Ovary (tissue), 10 donors: ENCODE measurements at regions of chr20 and their contacts with region 1.

Region 1: DNA sequence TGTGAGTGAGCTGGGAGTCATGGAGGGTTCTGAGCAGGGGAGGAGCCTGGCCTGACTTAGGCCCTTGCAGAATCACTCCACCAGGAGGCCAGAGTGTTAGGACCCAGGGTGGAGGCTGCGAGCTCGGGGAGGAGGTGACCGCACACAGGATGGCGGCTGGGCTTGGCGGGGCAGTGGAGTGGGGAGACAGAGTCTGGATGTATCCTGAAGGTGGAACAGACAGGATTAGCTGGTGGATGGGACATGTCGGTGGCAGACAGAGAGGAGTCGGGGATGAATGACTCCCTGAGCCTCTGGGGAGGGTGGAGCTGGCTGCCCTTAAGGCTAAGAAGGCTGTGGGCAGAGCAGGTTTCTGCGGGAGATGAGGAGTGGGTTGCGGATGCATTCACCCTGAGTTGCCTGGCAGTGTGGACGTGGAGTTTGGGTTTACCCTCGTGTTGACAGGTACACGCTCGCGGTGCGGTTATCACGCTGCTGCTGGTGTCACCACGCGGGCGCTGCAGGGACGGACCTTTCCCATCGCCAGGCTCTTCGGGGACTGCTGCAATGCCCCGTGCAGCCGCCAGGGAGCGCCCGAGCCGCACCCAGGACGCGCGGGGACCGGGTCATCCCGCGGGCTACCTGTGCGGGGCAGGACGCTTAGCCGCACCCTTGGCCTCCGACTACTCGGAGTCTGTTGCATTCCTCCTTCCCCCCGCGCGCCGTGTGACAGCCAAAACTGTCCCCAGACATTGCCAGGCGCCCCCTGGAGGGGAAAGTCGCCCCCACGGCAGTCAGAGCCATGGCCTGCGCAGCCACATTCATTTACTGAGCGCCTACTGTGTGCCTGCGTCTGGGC is 43.0 kb upstream of the PTGIS start:
- DNase-seq: peak; percentile 64 to 84 (median 78)
- H3K4me3 ChIP-seq: no peak overlapping the region
- H3K27ac ChIP-seq: no peak overlapping the region
- H3K4me1 ChIP-seq: peaks cover 5% of the 10 kb centered on the region
- H3K27me3 ChIP-seq: no peaks in the 10 kb centered on the region
- CTCF ChIP-seq: peak; percentile 98 to 99 (median 99)
- EP300 ChIP-seq: no peak
- POLR2A ChIP-seq: peak; percentile 30

Region 2: GRCh38 chr20:48180184-48180957 is 1430.5 kb before region 1 on chr20:
- intact Hi-C with region 1: no loop called
- DNase-seq: peak in 1 of 5 donors; percentile 29
- H3K4me3 ChIP-seq: no peak overlapping the region
- H3K27ac ChIP-seq: no peak overlapping the region
- H3K4me1 ChIP-seq: peaks cover 7% of the 10 kb centered on the region
- H3K27me3 ChIP-seq: no peaks in the 10 kb centered on the region
- CTCF ChIP-seq: no peak
- EP300 ChIP-seq: no peak
- POLR2A ChIP-seq: no peak

Region 3: GRCh38 chr20:49330544-49331239 is 280.2 kb before region 1 on chr20:
- intact Hi-C with region 1: loop called (anchors 5 to 10 kb)
- DNase-seq: no peak
- H3K4me3 ChIP-seq: no peak overlapping the region
- H3K27ac ChIP-seq: no peak overlapping the region
- H3K4me1 ChIP-seq: no peaks in the 10 kb centered on the region
- H3K27me3 ChIP-seq: no peaks in the 10 kb centered on the region
- CTCF ChIP-seq: no peak
- EP300 ChIP-seq: no peak
- POLR2A ChIP-seq: no peak

Region 4: DNA sequence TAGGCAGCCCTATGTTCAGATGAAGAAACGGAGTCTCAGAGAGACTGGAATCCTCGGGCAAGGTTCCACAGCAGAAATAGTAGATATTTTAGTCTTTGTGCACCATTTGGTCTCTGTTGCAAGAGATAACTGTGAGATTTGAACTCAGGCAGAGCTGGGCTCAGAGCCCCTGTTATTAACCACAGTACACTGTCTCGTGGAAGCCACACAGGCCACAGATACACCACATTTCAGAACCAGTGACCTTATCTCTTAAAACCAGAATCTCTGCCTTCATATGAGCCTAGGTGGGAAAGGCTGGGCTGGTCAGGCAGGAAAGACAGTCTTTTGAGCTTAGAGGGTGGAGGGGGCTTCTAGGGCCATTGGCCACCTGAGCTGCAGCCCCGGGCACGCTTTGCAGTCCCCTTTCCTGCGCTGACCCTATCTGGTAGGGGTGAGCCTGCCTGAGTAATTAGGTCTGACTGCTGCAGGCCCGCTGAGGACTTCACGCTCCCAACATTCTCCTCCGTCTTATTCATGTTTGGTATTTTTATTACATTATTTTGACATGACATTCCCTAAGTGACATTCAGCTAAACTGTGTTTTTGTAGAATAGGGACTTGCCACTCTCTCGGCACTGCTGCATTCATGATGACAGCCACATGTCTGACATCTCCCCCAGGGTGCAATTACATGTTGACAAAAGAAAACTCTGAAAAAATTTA is 199.5 kb before region 1 on chr20:
- intact Hi-C with region 1: loop called in 1 of 4 experiments (anchors 10 kb)
- DNase-seq: no peak
- H3K4me3 ChIP-seq: no peak overlapping the region
- H3K27ac ChIP-seq: no peak overlapping the region
- H3K4me1 ChIP-seq: no peaks in the 10 kb centered on the region
- H3K27me3 ChIP-seq: no peaks in the 10 kb centered on the region
- CTCF ChIP-seq: no peak
- EP300 ChIP-seq: no peak
- POLR2A ChIP-seq: no peak

Region 5: DNA sequence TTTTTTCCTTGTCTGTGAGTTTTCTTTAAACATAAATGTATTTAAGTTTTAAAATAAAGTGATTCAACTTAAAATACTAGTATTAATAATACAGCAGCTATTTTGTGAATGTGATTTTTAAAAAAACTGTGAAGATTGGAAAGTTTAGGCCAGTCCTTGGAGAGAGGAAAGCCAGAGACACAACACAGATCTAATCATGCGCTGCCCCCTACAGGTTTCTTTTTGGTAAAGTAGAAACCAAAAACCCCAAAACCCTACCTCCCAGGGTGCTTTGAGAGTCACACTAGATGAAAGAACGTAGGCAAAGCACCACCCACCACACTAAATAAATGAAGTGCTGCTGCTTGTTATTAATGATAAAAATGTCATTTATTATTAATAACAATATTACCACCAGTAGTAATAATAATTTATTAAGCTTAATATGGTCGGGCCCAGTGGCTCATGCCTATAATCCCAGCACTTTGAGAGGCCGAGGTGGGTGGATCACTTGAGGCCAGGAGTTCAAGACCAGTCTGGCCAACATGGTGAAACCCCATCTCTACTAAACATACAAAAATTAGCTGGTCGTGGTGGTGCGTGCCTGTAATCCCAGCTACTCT is 235.4 kb after region 1 on chr20:
- intact Hi-C with region 1: loop called (anchors 1 to 5 kb)
- DNase-seq: peak in 3 of 5 donors; percentile 43 to 62 (median 43)
- H3K4me3 ChIP-seq: no peak overlapping the region
- H3K27ac ChIP-seq: no peak overlapping the region
- H3K4me1 ChIP-seq: no peaks in the 10 kb centered on the region
- H3K27me3 ChIP-seq: no peaks in the 10 kb centered on the region
- CTCF ChIP-seq: peak; percentile 14 to 60 (median 58)
- EP300 ChIP-seq: no peak
- POLR2A ChIP-seq: no peak

Region 6: DNA sequence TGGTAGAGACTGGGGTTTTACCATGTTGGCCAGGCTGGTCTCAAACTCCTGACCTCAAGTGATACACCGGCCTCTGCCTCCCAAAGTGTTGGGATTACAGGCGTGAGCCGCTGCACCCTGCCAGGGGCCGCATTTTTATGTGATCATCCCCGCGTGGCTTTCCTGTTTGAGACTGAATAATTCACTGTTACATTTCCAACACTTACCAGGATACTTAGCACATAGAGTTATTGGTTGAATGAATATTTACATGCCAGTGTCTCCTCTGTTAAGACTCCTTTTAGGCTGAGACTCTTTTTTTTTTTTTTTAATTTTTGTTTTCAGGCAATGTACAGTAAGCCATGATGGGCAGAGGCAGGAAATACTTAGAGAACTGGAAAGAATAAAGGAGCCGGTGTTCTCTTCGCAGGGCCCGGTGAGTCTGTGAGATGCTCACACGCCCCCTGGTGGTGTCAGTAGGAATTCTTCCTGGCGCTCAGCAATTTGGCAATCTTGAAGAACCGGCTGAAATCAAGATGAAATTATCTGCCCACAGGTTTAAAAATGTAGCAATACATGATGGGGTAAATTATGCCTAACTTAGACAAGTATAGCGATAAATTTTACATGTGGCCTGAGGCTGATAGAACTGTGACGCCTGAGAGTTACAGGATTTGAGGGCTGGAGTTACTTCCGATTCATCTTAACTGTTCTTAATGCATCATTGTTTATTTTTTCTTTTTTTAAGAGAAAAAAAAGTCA is 317.7 kb after region 1 on chr20:
- intact Hi-C with region 1: loop called in 3 of 4 experiments (anchors 5 to 10 kb)
- DNase-seq: peak; percentile 67 to 84 (median 81)
- H3K4me3 ChIP-seq: no peak overlapping the region
- H3K27ac ChIP-seq: no peak overlapping the region
- H3K4me1 ChIP-seq: no peaks in the 10 kb centered on the region
- H3K27me3 ChIP-seq: no peaks in the 10 kb centered on the region
- CTCF ChIP-seq: peak; percentile 76 to 96 (median 78)
- EP300 ChIP-seq: no peak
- POLR2A ChIP-seq: no peak